CD4-positive, alpha-beta T cell (primary cell): ENCODE measurements at regions of chr1 and their contacts with region 1.

Region 1: GRCh38 chr1:1511533-1512285 is at the start of gene ATAD3A:
- DNase-seq: peak; percentile 88 to 98 (median 94)
- ATAC-seq: peak; percentile 92
- H3K4me3 ChIP-seq: peak within 1 kb of the TSS; percentile 71
- H3K4me3 Mint-ChIP-seq: peak within 1 kb of the TSS; percentile 99
- H3K27ac ChIP-seq: peak within 1 kb of the TSS; percentile 79 to 88
- H3K27ac Mint-ChIP-seq: peak within 1 kb of the TSS; percentile 95
- H3K4me1 ChIP-seq: peaks cover 16% of the 10 kb centered on the region
- H3K4me1 Mint-ChIP-seq: peaks cover 14% of the 10 kb centered on the region
- H3K27me3 ChIP-seq: no peaks in the 10 kb centered on the region
- H3K27me3 Mint-ChIP-seq: no peaks in the 10 kb centered on the region
- CTCF ChIP-seq: no peak
- total RNA-seq, gene ATAD3A: 17.0 to 19.5 TPM

Region 2: GRCh38 chr1:1460540-1461130 is 51.1 kb before region 1 on chr1:
- CTCF ChIA-PET with region 1: no interaction called
- POLR2A ChIA-PET with region 1: no interaction called
- intact Hi-C with region 1: no loop called
- DNase-seq: no peak
- ATAC-seq: no peak
- H3K4me3 ChIP-seq: no peak overlapping the region
- H3K4me3 Mint-ChIP-seq: no peak overlapping the region
- H3K27ac ChIP-seq: no peak overlapping the region
- H3K27ac Mint-ChIP-seq: no peak overlapping the region
- H3K4me1 ChIP-seq: peaks cover 5% of the 10 kb centered on the region
- H3K4me1 Mint-ChIP-seq: no peaks in the 10 kb centered on the region
- H3K27me3 ChIP-seq: no peaks in the 10 kb centered on the region
- H3K27me3 Mint-ChIP-seq: peaks cover 4% of the 10 kb centered on the region
- CTCF ChIP-seq: no peak

Region 3: DNA sequence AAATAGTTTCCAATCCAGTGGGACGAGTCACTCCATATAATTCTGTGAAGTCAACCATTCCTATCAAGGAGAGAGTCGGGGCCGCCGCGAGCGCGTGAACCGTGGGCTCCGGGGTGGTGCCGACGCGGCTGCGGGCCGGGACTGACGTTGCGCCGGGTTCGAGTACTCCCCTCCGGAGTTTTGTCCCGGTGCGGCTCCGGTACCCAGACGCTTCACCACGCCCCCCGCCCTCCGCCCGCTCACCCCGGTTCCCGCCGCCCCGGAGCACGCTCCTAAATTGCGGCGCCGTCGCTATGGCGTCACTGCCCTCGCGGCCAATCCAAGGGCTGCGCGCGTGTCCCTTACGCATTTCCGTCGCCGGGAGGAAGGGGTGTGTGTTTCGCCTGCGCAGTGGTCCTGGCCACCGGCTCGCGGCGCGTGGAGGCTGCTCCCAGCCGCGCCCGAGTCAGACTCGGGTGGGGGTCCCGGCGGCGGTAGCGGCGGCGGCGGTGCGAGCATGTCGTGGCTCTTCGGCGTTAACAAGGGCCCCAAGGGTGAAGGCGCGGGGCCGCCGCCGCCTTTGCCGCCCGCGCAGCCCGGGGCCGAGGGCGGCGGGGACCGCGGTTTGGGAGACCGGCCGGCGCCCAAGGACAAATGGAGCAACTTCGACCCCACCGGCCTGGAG is 40.2 kb before region 1 on chr1 and contains the start of gene ATAD3B:
- CTCF ChIA-PET with region 1: no interaction called
- POLR2A ChIA-PET with region 1: no interaction called
- intact Hi-C with region 1: loop called in 1 of 2 experiments (anchors 2 kb)
- DNase-seq: peak; percentile 76 to 95 (median 88)
- ATAC-seq: peak; percentile 92
- H3K4me3 ChIP-seq: peak within 1 kb of the TSS; percentile 71
- H3K4me3 Mint-ChIP-seq: peak within 1 kb of the TSS; percentile 95
- H3K27ac ChIP-seq: peak within 1 kb of the TSS; percentile 37 to 67
- H3K27ac Mint-ChIP-seq: peak within 1 kb of the TSS; percentile 87
- H3K4me1 ChIP-seq: peaks cover 27% of the 10 kb centered on the region
- H3K4me1 Mint-ChIP-seq: peaks cover 26% of the 10 kb centered on the region
- H3K27me3 ChIP-seq: no peaks in the 10 kb centered on the region
- H3K27me3 Mint-ChIP-seq: no peaks in the 10 kb centered on the region
- CTCF ChIP-seq: no peak
- total RNA-seq, gene ATAD3B: 44.3 to 49.1 TPM